ENCODE measurements at regions of chr5 and their contacts with region 1.

Region 1: GRCh38 chr5:94740286-94740685 is 121.8 kb downstream of the SLF1 start:
- DNase-seq: no peak
- ATAC-seq: no peak
- H3K4me3 Mint-ChIP-seq: no peak overlapping the region
- H3K27ac Mint-ChIP-seq: no peak overlapping the region
- H3K4me1 Mint-ChIP-seq: peaks cover 18% of the 10 kb centered on the region
- H3K27me3 Mint-ChIP-seq: no peaks in the 10 kb centered on the region
- CTCF ChIP-seq: no peak

Region 2: GRCh38 chr5:94524841-94525697 is 215.2 kb before region 1 on chr5:
- CTCF ChIA-PET with region 1: interaction called, 29 read pairs
- POLR2A ChIA-PET with region 1: no interaction called
- DNase-seq: no peak
- ATAC-seq: peak; percentile 80
- H3K4me3 Mint-ChIP-seq: no peak overlapping the region
- H3K27ac Mint-ChIP-seq: no peak overlapping the region
- H3K4me1 Mint-ChIP-seq: peaks cover 9% of the 10 kb centered on the region
- H3K27me3 Mint-ChIP-seq: no peaks in the 10 kb centered on the region
- CTCF ChIP-seq: no peak

Region 3: DNA sequence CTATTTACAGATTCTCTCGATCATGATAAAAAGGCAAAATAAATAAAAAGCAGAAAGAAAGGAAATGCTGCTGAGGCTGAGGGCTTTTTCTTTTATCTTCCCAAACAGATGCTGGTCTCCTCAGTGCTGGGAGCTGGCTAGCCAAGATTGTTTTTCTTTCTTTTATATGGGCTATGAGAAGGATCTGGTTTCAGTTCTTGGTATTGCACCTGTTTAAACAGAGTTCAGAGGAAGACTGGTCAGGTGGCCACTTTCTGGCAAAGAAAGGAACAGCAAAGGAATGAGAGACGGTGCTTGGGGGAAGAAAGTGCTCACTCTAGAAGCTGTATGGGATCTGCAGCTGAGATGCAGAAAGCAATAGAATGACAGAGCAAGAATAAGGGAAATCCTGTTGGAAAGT is 32.9 kb before region 1 on chr5:
- CTCF ChIA-PET with region 1: interaction called, 17 read pairs
- POLR2A ChIA-PET with region 1: no interaction called
- DNase-seq: no peak
- ATAC-seq: peak; percentile 80
- H3K4me3 Mint-ChIP-seq: no peak overlapping the region
- H3K27ac Mint-ChIP-seq: peak overlapping the region; percentile 37
- H3K4me1 Mint-ChIP-seq: peaks cover 21% of the 10 kb centered on the region
- H3K27me3 Mint-ChIP-seq: no peaks in the 10 kb centered on the region
- CTCF ChIP-seq: no peak

Region 4: GRCh38 chr5:94725142-94725541 is 15.1 kb before region 1 on chr5:
- CTCF ChIA-PET with region 1: interaction called, 12 read pairs
- POLR2A ChIA-PET with region 1: interaction called, 3 read pairs
- DNase-seq: no peak
- ATAC-seq: no peak
- H3K4me3 Mint-ChIP-seq: no peak overlapping the region
- H3K27ac Mint-ChIP-seq: no peak overlapping the region
- H3K4me1 Mint-ChIP-seq: peaks cover 4% of the 10 kb centered on the region
- H3K27me3 Mint-ChIP-seq: no peaks in the 10 kb centered on the region; the same call in 1 of the 2 replicates
- CTCF ChIP-seq: no peak

Region 5: DNA sequence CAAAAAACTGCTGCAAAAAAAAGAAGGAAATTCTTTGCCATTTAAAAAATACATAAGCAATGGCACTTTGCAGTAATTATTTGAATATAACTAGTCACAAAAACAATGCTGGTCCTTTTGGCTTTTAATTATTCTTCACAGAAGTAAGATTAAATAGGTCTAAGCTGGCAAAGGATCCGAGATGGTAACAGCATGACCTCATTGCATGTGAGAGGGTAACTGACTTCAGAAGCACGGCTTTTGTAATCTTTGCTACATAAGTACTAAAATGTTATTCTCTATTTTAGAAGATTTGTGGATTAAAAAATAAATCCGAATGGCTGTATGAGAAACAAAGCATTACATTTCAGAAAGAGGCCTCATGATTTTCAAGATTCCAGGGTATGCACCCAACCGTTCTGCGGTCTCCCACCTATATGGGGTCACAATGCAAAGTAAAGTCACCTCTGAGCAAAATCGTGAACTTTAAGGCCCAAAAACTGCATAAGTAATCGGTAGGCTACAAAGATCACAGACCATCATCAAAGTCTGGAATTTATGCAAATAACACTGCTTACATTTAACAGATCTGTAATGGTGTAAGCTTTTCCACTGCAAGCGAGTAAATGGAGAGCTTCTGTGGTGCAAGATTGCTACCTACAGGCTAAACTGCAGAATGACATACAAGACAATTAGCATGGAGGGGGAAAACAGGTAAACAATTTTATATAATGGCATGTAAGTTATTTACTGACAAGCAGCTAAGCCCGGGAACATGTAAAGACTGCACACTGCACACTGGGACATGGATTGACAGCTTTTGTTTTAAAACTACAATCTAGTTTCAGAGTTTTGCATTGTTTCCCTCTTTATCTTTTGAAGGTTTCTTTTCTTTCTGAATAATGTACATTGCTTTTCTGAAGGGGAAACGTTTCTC is 109.8 kb after region 1 on chr5:
- CTCF ChIA-PET with region 1: interaction called, 12 read pairs
- POLR2A ChIA-PET with region 1: no interaction called
- DNase-seq: no peak
- ATAC-seq: peak; percentile 88
- H3K4me3 Mint-ChIP-seq: no peak overlapping the region
- H3K27ac Mint-ChIP-seq: no peak overlapping the region; the same call in 1 of the 2 replicates
- H3K4me1 Mint-ChIP-seq: peaks cover 47% of the 10 kb centered on the region
- H3K27me3 Mint-ChIP-seq: no peaks in the 10 kb centered on the region
- CTCF ChIP-seq: peak; percentile 68

Region 6: GRCh38 chr5:94893412-94894135 is 153.3 kb after region 1 on chr5:
- CTCF ChIA-PET with region 1: interaction called, 16 read pairs
- POLR2A ChIA-PET with region 1: no interaction called
- DNase-seq: no peak
- ATAC-seq: peak; percentile 93
- H3K4me3 Mint-ChIP-seq: no peak overlapping the region
- H3K27ac Mint-ChIP-seq: no peak overlapping the region
- H3K4me1 Mint-ChIP-seq: peaks cover 8% of the 10 kb centered on the region; the same call in 1 of the 2 replicates
- H3K27me3 Mint-ChIP-seq: no peaks in the 10 kb centered on the region
- CTCF ChIP-seq: no peak

Region 7: GRCh38 chr5:95406426-95407090 is 666.3 kb after region 1 on chr5:
- CTCF ChIA-PET with region 1: no interaction called
- POLR2A ChIA-PET with region 1: no interaction called
- DNase-seq: no peak
- ATAC-seq: no peak
- H3K4me3 Mint-ChIP-seq: no peak overlapping the region
- H3K27ac Mint-ChIP-seq: no peak overlapping the region
- H3K4me1 Mint-ChIP-seq: peaks cover 14% of the 10 kb centered on the region
- H3K27me3 Mint-ChIP-seq: no peaks in the 10 kb centered on the region
- CTCF ChIP-seq: no peak